ENCODE measurements at regions of chrX and their contacts with region 1.

Region 1: GRCh38 chrX:69158166-69158980 is 6.9 kb downstream of the PJA1 start:
- DNase-seq: peak; percentile 70 to 87 (median 75)
- ATAC-seq: peak; percentile 70 to 77
- H3K4me3 ChIP-seq: no peak overlapping the region
- H3K27ac ChIP-seq: no peak overlapping the region
- H3K4me1 ChIP-seq: peaks cover 4% of the 10 kb centered on the region
- H3K27me3 ChIP-seq: no peaks in the 10 kb centered on the region

Region 2: GRCh38 chrX:68574240-68574639 is 584.1 kb before region 1 on chrX:
- intact Hi-C with region 1: no loop called
- DNase-seq: no peak
- ATAC-seq: no peak
- H3K4me3 ChIP-seq: no peak overlapping the region
- H3K27ac ChIP-seq: no peak overlapping the region
- H3K4me1 ChIP-seq: no peaks in the 10 kb centered on the region
- H3K27me3 ChIP-seq: no peaks in the 10 kb centered on the region

Region 3: GRCh38 chrX:68978258-68979054 is 179.9 kb before region 1 on chrX:
- intact Hi-C with region 1: no loop called
- DNase-seq: peak in 2 of 3 donors; percentile 57 to 59
- ATAC-seq: peak; percentile 55 to 64
- H3K4me3 ChIP-seq: no peak overlapping the region
- H3K27ac ChIP-seq: no peak overlapping the region
- H3K4me1 ChIP-seq: peaks cover 4% of the 10 kb centered on the region
- H3K27me3 ChIP-seq: no peaks in the 10 kb centered on the region

Region 4: GRCh38 chrX:69216911-69217310 is 58.5 kb after region 1 on chrX:
- intact Hi-C with region 1: loop called in 1 of 4 experiments (anchors 10 kb)
- DNase-seq: peak in 1 of 3 donors; percentile 53
- ATAC-seq: no peak
- H3K4me3 ChIP-seq: no peak overlapping the region
- H3K27ac ChIP-seq: no peak overlapping the region
- H3K4me1 ChIP-seq: no peaks in the 10 kb centered on the region
- H3K27me3 ChIP-seq: no peaks in the 10 kb centered on the region

Measured in right cardiac atrium (tissue), 5 donors.